ENCODE measurements at regions of chr20 and their contacts with region 1.

Region 1: DNA sequence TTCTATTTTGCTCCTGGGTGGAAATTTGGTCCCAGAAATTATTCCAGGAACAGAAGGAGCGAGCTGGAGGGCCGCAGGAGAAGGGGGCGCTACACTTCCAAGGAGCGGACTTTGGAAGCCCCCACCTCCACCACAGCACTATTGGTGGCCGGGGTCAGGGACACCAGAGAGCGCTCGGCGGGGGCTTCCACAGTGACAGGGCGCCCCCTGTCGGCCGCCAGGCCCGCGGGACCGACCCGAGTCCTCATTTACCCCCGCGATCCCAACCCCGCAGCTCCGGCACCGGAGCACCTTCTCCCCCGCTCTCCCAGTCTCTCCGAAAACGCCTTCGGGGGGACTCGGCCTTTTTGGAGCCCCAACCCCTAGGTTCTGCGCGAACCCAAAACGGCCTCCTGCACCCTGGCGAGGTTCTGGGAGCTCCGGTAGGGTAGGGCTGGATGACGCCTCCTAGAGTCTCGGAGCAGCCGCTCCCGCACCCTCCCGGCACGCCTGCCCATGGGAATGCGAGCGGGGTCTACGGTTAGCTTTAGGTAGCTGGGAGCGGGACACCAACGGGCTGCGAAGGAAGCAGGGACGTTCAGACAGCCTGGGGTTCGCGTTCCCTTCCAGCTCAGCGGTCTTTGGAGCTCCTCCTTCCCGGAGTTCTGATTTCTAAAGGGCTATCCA is 2.4 kb upstream of the FOXA2 start:
- DNase-seq: no peak
- H3K4me3 Mint-ChIP-seq: no peak overlapping the region
- H3K27ac Mint-ChIP-seq: no peak overlapping the region
- H3K4me1 Mint-ChIP-seq: no peaks in the 10 kb centered on the region
- H3K27me3 Mint-ChIP-seq: peaks cover 48% of the 10 kb centered on the region

Region 2: DNA sequence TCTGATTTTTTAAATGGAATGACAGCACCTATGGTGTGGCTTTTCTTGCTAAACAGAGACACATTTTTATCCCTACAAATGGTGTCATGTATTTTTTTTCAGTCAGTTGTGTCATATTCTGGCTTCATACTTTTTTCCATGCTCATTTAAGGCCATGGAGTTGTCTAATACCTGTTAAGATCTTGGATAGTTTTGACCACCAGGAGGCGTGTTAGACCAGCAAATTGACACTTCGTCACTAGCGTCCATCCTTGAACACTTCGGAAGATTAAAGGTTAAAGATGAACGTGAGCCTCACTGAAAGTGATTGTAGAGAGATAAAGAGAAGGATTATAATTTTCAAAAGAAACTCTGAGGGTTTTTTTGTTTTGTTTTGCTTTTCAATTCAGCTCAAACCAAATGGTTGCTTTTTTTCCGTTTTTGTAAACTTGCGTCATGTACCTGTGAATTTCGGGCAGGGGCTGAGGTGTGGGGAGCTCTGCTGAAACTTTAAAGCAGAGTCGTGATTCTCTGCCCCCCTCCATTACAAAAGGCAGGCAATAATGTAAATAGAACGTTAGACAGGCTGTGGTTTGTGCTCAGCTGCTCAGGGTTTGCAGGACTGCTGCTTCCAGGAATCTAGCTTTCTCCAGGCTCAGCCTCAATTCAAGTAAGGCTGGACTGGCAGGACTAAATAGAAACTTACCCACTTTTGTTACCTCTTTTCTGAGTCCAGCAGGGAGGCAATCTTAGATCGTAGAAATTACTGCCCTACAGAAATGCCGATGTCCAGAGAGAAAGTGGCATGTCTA is 247.5 kb before region 1 on chr20:
- intact Hi-C with region 1: loop called (anchors 5 kb)
- DNase-seq: no peak
- H3K4me3 Mint-ChIP-seq: no peak overlapping the region
- H3K27ac Mint-ChIP-seq: no peak overlapping the region
- H3K4me1 Mint-ChIP-seq: peaks cover 2% of the 10 kb centered on the region
- H3K27me3 Mint-ChIP-seq: peaks cover 1% of the 10 kb centered on the region

Region 3: GRCh38 chr20:22567944-22568871 is 18.6 kb before region 1 on chr20:
- intact Hi-C with region 1: loop called (anchors 2 kb)
- DNase-seq: no peak
- H3K4me3 Mint-ChIP-seq: no peak overlapping the region
- H3K27ac Mint-ChIP-seq: no peak overlapping the region
- H3K4me1 Mint-ChIP-seq: no peaks in the 10 kb centered on the region
- H3K27me3 Mint-ChIP-seq: peaks cover 63% of the 10 kb centered on the region

Region 4: GRCh38 chr20:22663528-22664025 is 76.8 kb after region 1 on chr20:
- intact Hi-C with region 1: no loop called
- DNase-seq: no peak
- H3K4me3 Mint-ChIP-seq: no peak overlapping the region
- H3K27ac Mint-ChIP-seq: no peak overlapping the region
- H3K4me1 Mint-ChIP-seq: no peaks in the 10 kb centered on the region
- H3K27me3 Mint-ChIP-seq: no peaks in the 10 kb centered on the region

Measured in activated T-helper 2 cell treated with anti-CD3 and anti-CD28 coated beads, Interferon-gamma antibody, Interleukin-2, Interleukin-4, amounts not matched to agents 10 μg/mL and 5 μg/mL and 100 μg/mL, durations not matched to agents 14 hours and 24 hours and 36 hours (primary cell).